Activated naive CD4-positive, alpha-beta T cell treated with anti-CD3 and anti-CD28 coated beads for 36 hours (primary cell): ENCODE measurements at regions of chr10 and their contacts with region 1.

Region 1: GRCh38 chr10:22228943-22229801 is 11.4 kb upstream of the EBLN1 start:
- DNase-seq: peak; percentile 89
- H3K4me3 Mint-ChIP-seq: peak overlapping the region; percentile 82
- H3K27ac Mint-ChIP-seq: peak overlapping the region; percentile 96
- H3K4me1 Mint-ChIP-seq: peaks cover 17% of the 10 kb centered on the region
- H3K27me3 Mint-ChIP-seq: peaks cover 5% of the 10 kb centered on the region

Region 2: DNA sequence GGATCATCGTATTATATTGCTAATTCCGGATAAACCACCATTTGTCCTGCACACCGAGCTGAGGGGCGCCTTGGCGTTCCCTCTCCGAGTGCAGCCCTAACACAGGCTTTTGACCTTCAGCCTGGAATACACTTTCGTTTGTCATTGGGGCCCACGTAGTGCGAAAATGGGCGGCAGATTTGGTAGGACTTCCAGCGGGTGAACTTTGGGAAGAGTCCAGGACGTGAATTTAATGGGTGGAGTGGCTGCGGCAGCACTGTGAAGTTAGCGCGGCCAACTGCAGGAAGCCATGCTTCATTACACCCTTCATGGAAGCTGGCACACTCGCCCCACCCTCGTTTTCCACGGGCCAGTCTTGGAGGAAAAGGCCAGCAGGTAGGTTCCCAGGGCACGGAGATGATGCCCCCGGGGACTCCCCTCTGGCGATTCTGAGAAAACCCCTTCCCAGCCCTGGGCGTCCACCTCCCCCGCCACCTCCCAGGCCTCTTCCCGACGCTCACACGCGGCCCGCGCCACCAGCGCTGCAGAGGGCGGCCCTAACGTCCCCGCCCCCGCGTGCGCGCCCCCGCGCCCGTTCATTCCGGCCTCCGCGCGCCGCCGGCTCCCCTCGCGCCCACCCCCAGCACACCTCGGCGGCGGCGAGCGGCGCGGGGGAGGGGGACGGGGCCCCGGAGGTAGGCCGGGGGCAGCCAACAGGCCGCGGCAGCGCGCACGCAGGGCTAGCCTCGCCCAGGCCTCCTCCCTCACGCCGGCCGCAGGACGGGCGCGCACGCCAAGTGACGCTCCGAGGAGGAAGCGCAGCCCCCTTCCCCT is 695.5 kb before region 1 on chr10 and contains the start of gene MLLT10:
- CTCF ChIA-PET with region 1: no interaction called
- intact Hi-C with region 1: loop called (anchors 1 kb)
- DNase-seq: peak; percentile 91
- H3K4me3 Mint-ChIP-seq: peak within 1 kb of the TSS; percentile 85
- H3K27ac Mint-ChIP-seq: peak within 1 kb of the TSS; percentile 91
- H3K4me1 Mint-ChIP-seq: peaks cover 23% of the 10 kb centered on the region
- H3K27me3 Mint-ChIP-seq: no peaks in the 10 kb centered on the region
- total RNA-seq, gene MLLT10: 23.0 to 23.7 TPM

Region 3: DNA sequence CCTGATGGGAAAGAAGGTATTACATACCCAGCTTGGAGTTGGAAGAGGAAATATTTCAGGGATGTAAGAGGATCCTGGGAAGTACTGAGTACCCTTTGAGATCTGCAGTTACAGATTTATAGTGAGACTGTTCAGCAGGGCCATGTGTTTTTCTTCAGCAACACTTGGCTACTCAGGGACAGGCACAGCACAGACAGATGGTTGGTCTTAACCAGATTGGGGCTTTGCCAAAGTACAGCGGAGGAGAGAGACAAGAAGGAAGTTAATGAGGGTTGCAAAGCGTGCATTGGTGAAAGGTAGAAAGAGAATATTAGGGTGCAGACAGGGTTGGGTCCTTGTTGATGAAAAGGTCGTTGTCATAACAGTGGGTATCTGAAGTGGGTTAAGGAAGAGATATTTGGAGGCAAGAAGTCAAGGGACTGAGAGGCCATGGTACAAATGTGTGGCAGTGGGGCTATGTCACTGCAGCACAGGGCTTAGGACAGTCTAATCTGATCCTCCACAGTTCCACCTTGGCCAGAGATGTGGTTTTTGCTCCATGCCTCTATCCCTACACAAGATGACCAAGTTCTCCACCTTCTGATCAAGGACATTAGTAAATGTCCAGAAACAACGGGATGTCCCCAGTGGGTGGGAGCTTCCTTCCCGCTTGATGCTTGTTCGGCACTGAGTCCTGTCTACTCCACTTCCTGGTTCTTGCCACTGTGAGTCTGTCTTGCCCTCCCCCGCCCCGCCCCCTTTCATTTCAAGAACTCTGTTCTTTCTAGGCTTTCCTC is 206.7 kb before region 1 on chr10:
- CTCF ChIA-PET with region 1: no interaction called
- intact Hi-C with region 1: loop called (anchors 5 kb)
- DNase-seq: peak; percentile 78
- H3K4me3 Mint-ChIP-seq: peak overlapping the region; percentile 65
- H3K27ac Mint-ChIP-seq: peak overlapping the region; percentile 80
- H3K4me1 Mint-ChIP-seq: peaks cover 22% of the 10 kb centered on the region
- H3K27me3 Mint-ChIP-seq: peaks cover 3% of the 10 kb centered on the region

Region 4: DNA sequence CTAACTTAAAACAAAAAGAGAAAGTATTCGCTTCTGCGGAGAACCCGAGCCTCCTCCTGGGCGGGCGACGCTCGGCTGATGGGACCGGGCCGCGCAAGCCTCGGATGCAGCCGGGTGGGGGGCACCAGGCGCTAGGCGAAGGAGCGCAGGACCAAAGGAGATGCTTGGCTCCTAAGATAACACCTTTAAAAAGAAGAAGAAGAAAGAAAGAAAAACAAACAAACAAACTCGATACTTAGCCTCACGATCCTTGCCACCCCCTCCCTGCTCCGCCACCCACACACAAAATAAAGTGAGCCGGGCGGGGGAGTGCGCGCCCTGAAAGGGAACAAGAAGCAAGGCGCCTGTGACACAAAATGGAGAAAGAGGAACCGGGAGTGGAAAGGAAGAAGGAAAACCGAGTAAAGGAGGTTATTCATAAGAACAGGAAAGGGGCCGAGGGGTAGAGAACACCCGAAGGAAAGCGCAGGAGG is 22.6 kb after region 1 on chr10:
- CTCF ChIA-PET with region 1: interaction called, 3 read pairs
- intact Hi-C with region 1: loop called (anchors 1 kb)
- DNase-seq: peak; percentile 74
- H3K4me3 Mint-ChIP-seq: peak overlapping the region; percentile 99
- H3K27ac Mint-ChIP-seq: peak overlapping the region; percentile 99
- H3K4me1 Mint-ChIP-seq: peaks cover 34% of the 10 kb centered on the region
- H3K27me3 Mint-ChIP-seq: peaks cover 5% of the 10 kb centered on the region

Region 5: DNA sequence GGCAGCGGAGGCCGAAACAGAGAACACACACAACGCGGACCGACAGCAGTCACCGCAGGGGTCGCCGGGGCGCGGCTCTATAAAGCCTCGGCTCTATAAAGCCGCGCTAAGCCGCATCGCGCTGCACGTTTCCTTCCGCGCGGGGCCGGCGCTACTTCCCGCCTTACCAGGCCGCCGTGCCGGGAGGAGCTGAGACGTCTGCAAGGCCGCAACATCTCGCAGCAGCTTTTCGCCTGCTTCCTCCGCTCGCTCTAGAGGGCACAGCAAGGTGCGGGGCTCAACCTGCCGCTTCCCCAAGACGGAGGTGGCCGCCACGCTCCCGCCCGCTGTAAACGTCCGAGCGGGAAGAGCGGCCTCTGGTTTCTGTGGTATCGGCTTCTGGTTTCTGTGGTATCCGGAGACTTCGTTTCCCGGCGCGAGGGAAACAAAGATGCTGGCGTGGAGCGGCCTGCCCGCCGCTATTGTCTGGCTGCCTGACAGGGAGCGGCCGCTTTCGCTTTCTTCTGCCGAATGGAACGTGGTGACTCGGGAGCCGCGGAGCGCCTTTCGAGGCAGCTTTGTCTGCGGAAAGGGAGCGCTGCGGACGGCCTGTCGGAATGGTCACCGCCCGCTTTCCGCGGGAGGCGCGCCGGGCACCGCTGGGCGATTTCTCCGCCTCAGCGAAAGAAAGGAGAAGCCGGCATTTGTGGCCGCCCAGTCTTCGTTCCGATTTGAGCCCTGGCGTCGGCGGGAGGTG is 207.9 kb after region 1 on chr10:
- CTCF ChIA-PET with region 1: interaction called, 3 read pairs
- intact Hi-C with region 1: loop called (anchors 2 kb)
- DNase-seq: peak; percentile 84
- H3K4me3 Mint-ChIP-seq: peak overlapping the region; percentile 84
- H3K27ac Mint-ChIP-seq: peak overlapping the region; percentile 92
- H3K4me1 Mint-ChIP-seq: peaks cover 31% of the 10 kb centered on the region
- H3K27me3 Mint-ChIP-seq: no peaks in the 10 kb centered on the region